Heart left ventricle (tissue), 16 donors: ENCODE measurements at regions of chr12 and their contacts with region 1.

Region 1: GRCh38 chr12:77087427-77087826 is 22.1 kb upstream of the E2F7 start:
- DNase-seq: no peak
- ATAC-seq: no peak
- H3K4me3 ChIP-seq: no peak overlapping the region
- H3K27ac ChIP-seq: no peak overlapping the region
- H3K4me1 ChIP-seq: no peaks in the 10 kb centered on the region
- H3K27me3 ChIP-seq: no peaks in the 10 kb centered on the region
- CTCF ChIP-seq: no peak
- POLR2A ChIP-seq: no peak

Region 2: GRCh38 chr12:76915361-76916169 is 171.9 kb before region 1 on chr12:
- intact Hi-C with region 1: no loop called
- DNase-seq: no peak
- ATAC-seq: peak in 2 of 4 donors; percentile 29 to 42
- H3K4me3 ChIP-seq: no peak overlapping the region
- H3K27ac ChIP-seq: peak overlapping the region in 6 of 12 donors; percentile 3 to 41 (median 26)
- H3K4me1 ChIP-seq: peaks cover 0 to 20% (median 1%) of the 10 kb centered on the region in 12 donors
- H3K27me3 ChIP-seq: no peaks in the 10 kb centered on the region
- CTCF ChIP-seq: no peak
- POLR2A ChIP-seq: no peak

Region 3: DNA sequence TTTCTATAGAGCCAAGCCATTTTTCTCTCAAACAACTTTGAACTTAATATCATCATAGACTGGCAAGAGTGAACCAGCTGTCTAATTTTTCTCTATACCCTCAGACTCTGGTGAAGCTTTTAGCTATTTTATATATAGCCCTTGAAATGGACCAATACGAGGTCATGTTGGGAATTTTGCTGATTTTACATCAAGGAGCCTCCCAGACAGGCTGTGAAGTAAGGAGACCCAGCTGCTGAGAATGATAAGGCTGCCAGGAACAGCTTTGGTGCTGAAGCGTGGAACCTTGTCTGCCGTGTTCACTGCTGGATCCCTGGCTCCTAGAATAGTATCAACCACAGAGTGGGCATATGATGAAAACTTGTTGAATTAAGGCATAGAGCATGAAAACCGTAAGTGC is 417.0 kb after region 1 on chr12:
- intact Hi-C with region 1: no loop called
- DNase-seq: no peak
- ATAC-seq: no peak
- H3K4me3 ChIP-seq: no peak overlapping the region
- H3K27ac ChIP-seq: no peak overlapping the region
- H3K4me1 ChIP-seq: no peaks in the 10 kb centered on the region
- H3K27me3 ChIP-seq: no peaks in the 10 kb centered on the region
- CTCF ChIP-seq: no peak
- POLR2A ChIP-seq: no peak

Region 4: GRCh38 chr12:77521508-77522115 is 434.2 kb after region 1 on chr12:
- intact Hi-C with region 1: loop called in 1 of 10 experiments (anchors 5 kb)
- DNase-seq: no peak
- ATAC-seq: no peak
- H3K4me3 ChIP-seq: no peak overlapping the region
- H3K27ac ChIP-seq: no peak overlapping the region
- H3K4me1 ChIP-seq: no peaks in the 10 kb centered on the region
- H3K27me3 ChIP-seq: no peaks in the 10 kb centered on the region
- CTCF ChIP-seq: no peak
- POLR2A ChIP-seq: no peak